WTC11 (cell line): ENCODE measurements at regions of chr14 and their contacts with region 1.

Region 1: GRCh38 chr14:66359500-66359899 is 126.7 kb upstream of the CCDC196 start:
- DNase-seq: no peak
- ATAC-seq: peak; percentile 31
- H3K4me3 Mint-ChIP-seq: 0 out of 2 replicates have a peak overlapping the region, but pooled peaks have one; percentile 7
- H3K27ac Mint-ChIP-seq: no peak overlapping the region
- H3K4me1 Mint-ChIP-seq: peaks cover 29% of the 10 kb centered on the region
- H3K27me3 Mint-ChIP-seq: peaks cover 17% of the 10 kb centered on the region
- CTCF ChIP-seq: peak; percentile 61

Region 2: DNA sequence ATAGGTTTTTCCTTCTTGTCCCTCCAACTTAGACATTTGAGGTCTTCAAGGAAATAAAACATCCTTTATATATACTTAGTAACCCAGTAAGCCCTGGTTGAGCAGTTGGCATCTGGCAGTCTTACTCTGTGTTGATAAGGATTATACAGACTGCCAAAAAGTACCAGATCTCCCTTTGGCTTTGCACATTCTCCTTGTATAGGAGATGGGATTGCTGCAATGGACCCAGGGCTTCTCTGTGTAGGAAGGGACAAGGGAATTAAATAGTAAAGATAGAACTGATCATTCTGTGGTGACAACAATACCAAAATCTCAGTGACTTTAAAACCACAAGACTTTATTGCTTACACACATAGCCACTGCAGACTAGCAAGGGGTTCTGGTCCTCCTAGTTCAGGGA is 53.4 kb before region 1 on chr14:
- CTCF ChIA-PET with region 1: no interaction called
- POLR2A ChIA-PET with region 1: no interaction called
- DNase-seq: no peak
- ATAC-seq: no peak
- H3K4me3 Mint-ChIP-seq: no peak overlapping the region
- H3K27ac Mint-ChIP-seq: no peak overlapping the region
- H3K4me1 Mint-ChIP-seq: no peaks in the 10 kb centered on the region
- H3K27me3 Mint-ChIP-seq: peaks cover 4% of the 10 kb centered on the region
- CTCF ChIP-seq: no peak

Region 3: GRCh38 chr14:66395300-66395699 is 35.8 kb after region 1 on chr14:
- CTCF ChIA-PET with region 1: interaction called, 11 read pairs
- POLR2A ChIA-PET with region 1: no interaction called
- DNase-seq: no peak
- ATAC-seq: peak; percentile 52; the same call in 1 of the 2 replicates
- H3K4me3 Mint-ChIP-seq: no peak overlapping the region
- H3K27ac Mint-ChIP-seq: no peak overlapping the region
- H3K4me1 Mint-ChIP-seq: no peaks in the 10 kb centered on the region
- H3K27me3 Mint-ChIP-seq: peaks cover 4% of the 10 kb centered on the region
- CTCF ChIP-seq: no peak

Region 4: DNA sequence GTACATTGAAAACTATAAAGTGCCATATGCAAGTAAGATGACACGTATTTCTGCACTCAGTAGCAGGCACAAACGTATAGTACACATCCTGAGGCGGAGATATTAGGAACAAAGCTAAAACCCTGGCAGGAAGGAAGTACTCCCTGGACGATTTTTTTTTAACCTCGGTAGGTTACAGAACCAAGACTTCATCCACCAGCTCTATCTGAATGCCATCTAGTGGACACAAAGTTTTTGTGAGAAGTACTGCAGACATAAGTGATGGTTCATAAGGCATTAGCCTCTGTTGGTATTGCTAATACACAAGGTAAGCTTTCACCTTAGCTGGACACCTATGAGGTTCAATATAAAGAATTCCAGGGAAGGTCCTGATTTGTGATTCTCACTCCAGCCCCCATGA is 43.7 kb after region 1 on chr14:
- CTCF ChIA-PET with region 1: interaction called, 49 read pairs
- POLR2A ChIA-PET with region 1: no interaction called
- DNase-seq: no peak
- ATAC-seq: peak; percentile 68
- H3K4me3 Mint-ChIP-seq: no peak overlapping the region
- H3K27ac Mint-ChIP-seq: no peak overlapping the region
- H3K4me1 Mint-ChIP-seq: peaks cover 9% of the 10 kb centered on the region
- H3K27me3 Mint-ChIP-seq: no peaks in the 10 kb centered on the region
- CTCF ChIP-seq: no peak

Region 5: DNA sequence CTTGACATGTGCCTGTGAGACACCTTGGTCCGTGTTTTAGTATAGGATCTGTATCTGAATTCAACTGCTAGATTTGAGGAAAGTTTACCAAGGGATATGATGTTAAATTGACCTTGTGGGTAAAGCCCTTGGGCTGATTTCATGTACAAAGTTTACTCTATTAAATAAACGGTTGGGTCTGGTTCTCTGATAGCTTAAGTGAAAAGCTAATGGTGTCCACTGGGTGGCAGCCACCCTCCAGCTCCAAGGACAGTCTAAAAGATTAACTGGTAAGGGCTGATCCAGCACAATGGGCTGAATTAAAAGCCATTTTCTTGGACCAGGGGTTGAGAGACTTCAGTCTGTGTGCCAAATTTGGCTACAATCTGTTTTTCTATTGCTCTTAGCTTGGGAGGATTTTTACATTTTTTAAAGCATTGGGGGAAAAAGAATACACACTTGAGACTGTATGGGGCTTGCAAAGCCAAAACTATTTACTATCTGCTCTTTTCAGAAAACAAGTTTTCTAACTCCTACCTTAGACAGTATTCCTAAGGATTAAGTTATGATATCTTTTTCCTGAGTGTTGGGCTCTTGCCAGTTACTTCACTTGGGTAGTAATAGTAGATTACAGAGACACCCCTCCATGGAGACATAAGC is 264.9 kb after region 1 on chr14:
- CTCF ChIA-PET with region 1: interaction called, 18 read pairs
- POLR2A ChIA-PET with region 1: no interaction called
- DNase-seq: peak; percentile 62
- ATAC-seq: peak; percentile 99
- H3K4me3 Mint-ChIP-seq: no peak overlapping the region
- H3K27ac Mint-ChIP-seq: no peak overlapping the region
- H3K4me1 Mint-ChIP-seq: peaks cover 20% of the 10 kb centered on the region; the same call in 1 of the 2 replicates
- H3K27me3 Mint-ChIP-seq: no peaks in the 10 kb centered on the region
- CTCF ChIP-seq: peak; percentile 39; the same call in 1 of the 2 replicates